ENCODE measurements at regions of chr2 and their contacts with region 1.

Region 1: DNA sequence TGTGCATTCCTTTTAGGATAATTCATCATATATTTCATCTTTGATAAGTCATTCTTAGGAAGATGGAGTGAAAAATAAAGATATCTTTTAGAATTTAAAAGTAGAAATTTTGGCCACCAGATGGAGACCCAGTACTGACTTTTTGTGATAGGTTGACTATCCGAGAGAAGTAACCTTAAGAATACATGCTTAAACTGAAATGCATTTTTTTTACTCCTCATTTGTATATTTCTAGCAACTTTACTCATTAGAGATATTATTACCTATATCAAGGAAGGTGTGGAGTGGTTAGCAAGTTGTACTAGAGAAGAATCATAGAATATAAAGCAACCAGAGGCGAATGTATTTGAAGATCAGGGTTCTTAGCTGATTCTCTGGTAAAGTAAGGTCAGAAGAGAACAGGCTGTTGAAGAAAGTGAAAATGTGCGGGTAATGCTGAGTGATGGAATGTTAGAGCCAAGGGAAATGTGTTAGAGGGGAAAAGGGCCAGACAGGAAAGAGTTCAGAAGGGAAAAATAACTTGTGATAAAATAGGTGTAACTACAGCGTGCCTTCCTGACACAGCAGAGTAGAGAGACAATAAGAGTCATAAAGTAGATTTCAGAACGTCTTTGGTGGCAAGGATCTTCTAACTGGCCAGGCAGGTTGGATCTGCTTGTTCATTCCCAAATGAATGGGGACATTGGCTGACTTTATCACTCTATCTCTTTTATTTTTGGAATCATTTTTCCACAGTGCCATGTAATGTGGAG is 52.3 kb downstream of the TDRD15 start:
- DNase-seq: no peak
- ATAC-seq: no peak
- H3K4me3 ChIP-seq: no peak overlapping the region
- H3K27ac ChIP-seq: no peak overlapping the region
- H3K4me1 ChIP-seq: no peaks in the 10 kb centered on the region
- H3K27me3 ChIP-seq: no peaks in the 10 kb centered on the region
- CTCF ChIP-seq: peak; percentile 37

Region 2: GRCh38 chr2:21020031-21020667 is 155.9 kb before region 1 on chr2:
- intact Hi-C with region 1: no loop called
- DNase-seq: no peak
- ATAC-seq: no peak
- H3K4me3 ChIP-seq: no peak overlapping the region
- H3K27ac ChIP-seq: no peak overlapping the region
- H3K4me1 ChIP-seq: no peaks in the 10 kb centered on the region
- H3K27me3 ChIP-seq: no peaks in the 10 kb centered on the region
- CTCF ChIP-seq: no peak

Region 3: DNA sequence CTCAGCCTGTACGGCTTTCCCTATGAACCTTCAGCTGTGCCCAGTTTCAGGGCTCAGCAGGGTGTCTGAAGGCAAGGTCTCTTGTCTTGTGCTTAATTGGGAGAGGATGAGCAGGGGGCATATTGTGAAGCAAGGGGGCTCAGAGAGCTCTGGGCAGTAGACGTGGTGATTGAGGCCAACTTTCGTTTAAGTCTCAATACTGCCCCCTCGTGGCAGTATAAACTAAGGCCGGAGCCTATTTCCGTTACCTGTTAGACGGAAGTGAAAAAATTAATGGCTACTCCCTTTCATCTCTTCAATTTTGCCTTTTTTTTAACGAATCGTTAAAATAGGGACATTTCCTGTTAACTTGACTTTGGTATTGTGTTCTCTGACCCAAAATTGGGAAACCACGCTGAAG is 141.1 kb after region 1 on chr2:
- intact Hi-C with region 1: loop called (anchors 10 kb)
- DNase-seq: no peak
- ATAC-seq: peak; percentile 83
- H3K4me3 ChIP-seq: no peak overlapping the region
- H3K27ac ChIP-seq: no peak overlapping the region
- H3K4me1 ChIP-seq: no peaks in the 10 kb centered on the region
- H3K27me3 ChIP-seq: no peaks in the 10 kb centered on the region
- CTCF ChIP-seq: peak; percentile 68

Measured in upper lobe of right lung (tissue), 1 donor.